ENCODE measurements at regions of chr3 and their contacts with region 1.

Region 1: GRCh38 chr3:19348929-19349564 is 200.7 kb downstream of the KCNH8 start:
- DNase-seq: no peak
- ATAC-seq: peak in 1 of 4 donors; percentile 63
- H3K4me3 ChIP-seq: no peak overlapping the region
- H3K27ac ChIP-seq: no peak overlapping the region
- H3K4me1 ChIP-seq: no peaks in the 10 kb centered on the region
- H3K27me3 ChIP-seq: no peaks in the 10 kb centered on the region
- CTCF ChIP-seq: peak; percentile 57 to 86 (median 72)
- POLR2A ChIP-seq: no peak

Region 2: DNA sequence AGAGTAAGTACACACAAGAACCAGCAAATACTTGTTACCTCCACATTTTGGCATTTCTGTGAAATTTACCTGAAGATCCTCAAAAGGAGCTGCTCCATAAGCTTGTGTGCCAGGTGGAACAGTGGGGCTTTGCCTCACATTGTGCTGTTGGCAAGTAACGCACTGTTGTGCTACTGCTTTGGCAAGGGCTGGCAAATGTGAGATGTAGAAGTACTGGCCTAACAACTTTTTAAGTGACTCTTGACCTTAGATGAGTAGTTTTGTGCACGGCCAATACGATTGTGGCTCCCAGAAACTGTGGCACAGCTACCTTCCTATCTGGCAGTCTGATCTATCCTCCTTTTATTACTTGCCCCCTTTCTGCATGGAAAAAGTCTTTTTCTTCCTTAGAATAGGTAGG is 136.2 kb after region 1 on chr3:
- intact Hi-C with region 1: loop called in 1 of 10 experiments (anchors 10 kb)
- DNase-seq: no peak
- ATAC-seq: no peak
- H3K4me3 ChIP-seq: no peak overlapping the region
- H3K27ac ChIP-seq: no peak overlapping the region
- H3K4me1 ChIP-seq: no peaks in the 10 kb centered on the region
- H3K27me3 ChIP-seq: no peaks in the 10 kb centered on the region
- CTCF ChIP-seq: no peak
- POLR2A ChIP-seq: no peak

Region 3: DNA sequence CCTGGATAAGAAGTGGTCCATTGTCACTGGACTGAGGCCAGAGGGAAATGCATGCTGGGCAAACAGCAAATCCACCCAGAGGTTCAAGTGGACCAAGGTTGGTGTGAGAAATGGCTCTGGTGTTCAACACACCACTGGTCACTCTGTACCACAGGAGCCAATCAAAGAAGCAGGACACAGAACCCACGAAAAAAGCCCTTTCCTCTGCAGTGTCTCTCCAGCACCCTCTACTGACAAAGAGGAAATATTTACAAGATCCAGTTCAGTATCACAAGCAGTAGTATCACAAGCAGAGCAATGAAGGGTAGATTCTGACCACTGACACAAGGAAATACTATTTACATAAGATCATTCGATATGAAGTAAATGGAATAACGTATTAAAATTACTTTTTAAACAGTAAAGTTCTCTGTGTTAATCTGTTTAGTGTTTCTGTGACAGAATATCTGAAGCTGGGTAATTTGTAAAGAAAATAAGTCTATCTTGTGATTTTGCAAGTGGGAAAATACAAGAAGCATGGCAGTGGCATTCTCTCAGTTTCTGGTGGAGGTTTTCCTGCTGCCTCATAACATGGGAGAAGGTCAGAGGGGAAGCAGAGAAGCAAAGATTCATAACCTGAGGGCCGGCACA is 194.3 kb after region 1 on chr3:
- intact Hi-C with region 1: loop called (anchors 1 to 5 kb)
- DNase-seq: no peak
- ATAC-seq: peak; percentile 42 to 71 (median 58)
- H3K4me3 ChIP-seq: no peak overlapping the region
- H3K27ac ChIP-seq: no peak overlapping the region
- H3K4me1 ChIP-seq: no peaks in the 10 kb centered on the region
- H3K27me3 ChIP-seq: no peaks in the 10 kb centered on the region
- CTCF ChIP-seq: peak; percentile 32 to 62 (median 58)
- POLR2A ChIP-seq: no peak

Region 4: DNA sequence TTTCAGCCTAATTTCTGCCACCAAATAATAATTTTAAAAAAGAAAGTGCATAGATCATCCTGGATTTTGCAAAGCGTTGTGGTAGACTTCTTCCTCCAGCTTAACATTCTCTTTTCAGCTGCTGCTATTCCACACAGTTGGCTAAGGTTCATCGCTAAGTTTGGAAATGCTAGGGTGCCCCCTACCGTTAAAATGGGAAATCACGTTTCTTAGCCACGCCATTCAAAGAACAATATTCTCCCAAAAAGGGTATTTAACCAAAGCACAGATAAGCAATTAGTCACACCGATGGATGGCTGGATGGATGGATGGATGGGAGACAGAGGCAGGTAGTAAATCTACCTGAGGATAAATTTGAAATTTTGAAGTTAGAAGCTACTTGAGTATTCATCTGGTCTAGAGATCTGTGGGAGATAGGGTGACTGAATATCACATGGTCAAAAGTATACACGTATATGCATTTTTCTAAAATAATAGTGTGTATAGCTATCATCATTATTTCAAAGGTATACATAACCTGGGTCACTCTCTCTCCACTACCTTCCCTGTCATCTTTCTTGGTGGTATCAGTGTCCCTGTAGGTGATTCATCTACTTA is 517.8 kb after region 1 on chr3:
- intact Hi-C with region 1: loop called (anchors 1 to 10 kb)
- DNase-seq: peak in 2 of 5 donors; percentile 14 to 23
- ATAC-seq: peak in 3 of 4 donors; percentile 46 to 64 (median 59)
- H3K4me3 ChIP-seq: no peak overlapping the region
- H3K27ac ChIP-seq: peak overlapping the region in 1 of 12 donors; percentile 27
- H3K4me1 ChIP-seq: peaks cover 0 to 3% (median 0%) of the 10 kb centered on the region in 12 donors
- H3K27me3 ChIP-seq: peaks cover 0 to 4% (median 0%) of the 10 kb centered on the region in 9 donors
- CTCF ChIP-seq: peak; percentile 59 to 84 (median 76)
- POLR2A ChIP-seq: no peak

Region 5: GRCh38 chr3:19881036-19881435 is 532.0 kb after region 1 on chr3:
- intact Hi-C with region 1: no loop called
- DNase-seq: no peak
- ATAC-seq: no peak
- H3K4me3 ChIP-seq: no peak overlapping the region
- H3K27ac ChIP-seq: no peak overlapping the region
- H3K4me1 ChIP-seq: peaks cover 0 to 3% (median 0%) of the 10 kb centered on the region in 12 donors
- H3K27me3 ChIP-seq: no peaks in the 10 kb centered on the region
- CTCF ChIP-seq: no peak
- POLR2A ChIP-seq: no peak

Measured in heart left ventricle (tissue), 16 donors.